ENCODE measurements at regions of chrX and their contacts with region 1.

Region 1: DNA sequence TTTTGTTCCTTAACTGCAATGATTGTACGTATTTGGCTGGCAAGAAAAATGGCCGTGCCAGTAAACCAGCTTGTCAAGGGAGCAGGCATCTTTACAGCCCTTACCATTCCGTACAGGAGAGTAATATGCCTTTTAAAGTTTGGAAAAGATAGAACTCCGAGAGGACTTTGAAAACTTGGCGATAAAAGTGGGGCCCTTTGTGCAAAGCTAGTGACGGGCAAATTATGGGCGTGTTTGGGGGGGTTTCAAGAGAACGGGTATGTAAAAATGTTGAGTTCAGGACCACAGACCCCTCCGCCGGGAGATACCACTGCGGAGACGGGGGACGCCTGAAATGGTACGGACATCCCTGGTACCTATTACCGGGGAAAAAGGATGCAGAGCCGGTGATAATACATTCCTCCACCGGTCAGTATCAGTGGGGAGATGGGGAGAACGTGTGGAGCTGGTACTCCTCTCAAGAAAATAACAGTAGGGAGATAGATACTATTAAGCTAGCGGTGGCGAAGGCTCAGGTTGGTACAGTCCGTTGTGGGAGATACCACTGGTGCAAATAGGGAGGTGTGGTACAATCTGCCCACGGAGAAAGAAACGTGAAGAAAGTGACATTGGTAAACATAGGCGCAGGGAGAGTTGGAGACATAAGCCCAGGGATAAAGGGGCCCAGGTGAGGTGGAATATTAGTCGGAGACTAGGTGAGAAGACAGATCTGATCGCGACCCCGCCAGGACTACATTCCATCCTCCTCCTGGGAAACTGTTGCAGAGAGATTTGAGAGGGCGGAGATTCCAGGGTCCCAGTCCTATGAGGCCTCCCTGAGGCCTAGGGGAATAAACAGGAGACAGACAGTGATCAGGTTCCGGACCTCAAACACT is 14.5 kb downstream of the SPACA5 start:
- DNase-seq: peak; percentile 83
- H3K4me3 ChIP-seq: peak overlapping the region; percentile 75
- H3K27ac ChIP-seq: peak overlapping the region; percentile 60
- H3K4me1 ChIP-seq: no peaks in the 10 kb centered on the region
- CTCF ChIP-seq: no peak

Region 2: GRCh38 chrX:47497273-47497672 is 524.0 kb before region 1 on chrX:
- CTCF ChIA-PET with region 1: no interaction called
- POLR2A ChIA-PET with region 1: no interaction called
- intact Hi-C with region 1: loop called (anchors 5 kb)
- DNase-seq: peak; percentile 23
- H3K4me3 ChIP-seq: no peak overlapping the region
- H3K27ac ChIP-seq: no peak overlapping the region
- H3K4me1 ChIP-seq: peaks cover 16% of the 10 kb centered on the region
- CTCF ChIP-seq: peak; percentile 77

Region 3: GRCh38 chrX:47650164-47651042 is 370.9 kb before region 1 on chrX and contains the start of gene ELK1:
- CTCF ChIA-PET with region 1: no interaction called
- POLR2A ChIA-PET with region 1: no interaction called
- intact Hi-C with region 1: loop called (anchors 10 kb)
- DNase-seq: peak; percentile 96
- H3K4me3 ChIP-seq: peak within 1 kb of the TSS; percentile 96
- H3K27ac ChIP-seq: peak within 1 kb of the TSS; percentile 52
- H3K4me1 ChIP-seq: peaks cover 21% of the 10 kb centered on the region
- CTCF ChIP-seq: no peak
- total RNA-seq, gene ELK1: 23.0 and 23.3 TPM in 2 replicates

Region 4: GRCh38 chrX:47854474-47854873 is 166.8 kb before region 1 on chrX:
- CTCF ChIA-PET with region 1: no interaction called
- POLR2A ChIA-PET with region 1: no interaction called
- intact Hi-C with region 1: loop called (anchors 1 kb)
- DNase-seq: peak; percentile 22
- H3K4me3 ChIP-seq: no peak overlapping the region
- H3K27ac ChIP-seq: no peak overlapping the region
- H3K4me1 ChIP-seq: peaks cover 8% of the 10 kb centered on the region
- CTCF ChIP-seq: peak; percentile 66

Region 5: DNA sequence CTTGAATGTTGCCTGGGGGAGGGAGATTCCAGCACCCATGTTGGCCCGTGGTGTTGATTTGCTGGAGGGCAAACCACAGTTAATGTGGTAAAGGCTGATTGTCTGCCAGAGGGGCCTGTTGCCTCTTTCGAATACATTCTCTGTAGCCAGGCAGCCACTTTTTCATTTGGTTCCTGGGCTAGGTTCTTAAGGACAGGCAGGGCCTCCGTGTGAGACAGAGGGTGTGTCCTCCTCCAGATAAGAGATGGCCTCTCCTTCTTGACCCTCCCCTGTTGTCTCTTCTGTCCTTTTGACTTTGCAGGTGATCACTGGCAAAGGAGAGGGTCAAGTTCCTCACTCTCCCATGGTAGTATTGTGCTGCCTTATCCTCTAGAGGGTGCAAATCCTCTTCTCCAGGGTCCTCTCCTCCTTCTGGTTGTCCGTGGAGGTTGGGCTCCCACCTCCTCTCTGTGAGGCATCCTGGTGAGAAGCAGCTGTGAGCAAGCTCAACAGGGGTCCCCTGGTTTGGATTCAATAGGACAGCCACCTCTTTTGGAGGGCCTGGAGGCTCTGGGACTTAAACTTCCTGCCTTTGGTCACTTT is 62.4 kb before region 1 on chrX:
- CTCF ChIA-PET with region 1: no interaction called
- POLR2A ChIA-PET with region 1: no interaction called
- intact Hi-C with region 1: loop called (anchors 2 kb)
- DNase-seq: peak; percentile 51
- H3K4me3 ChIP-seq: no peak overlapping the region
- H3K27ac ChIP-seq: no peak overlapping the region
- H3K4me1 ChIP-seq: peaks cover 21% of the 10 kb centered on the region
- CTCF ChIP-seq: peak; percentile 62

Measured in OCI-LY7 (cell line).